Activated CD4-positive, alpha-beta T cell treated with anti-CD3 and anti-CD28 coated beads, Interleukin-2, amount 10 ng/mL, durations not matched to agents 7 days and 5 days (primary cell): ENCODE measurements at regions of chr10 and their contacts with region 1.

Region 1: DNA sequence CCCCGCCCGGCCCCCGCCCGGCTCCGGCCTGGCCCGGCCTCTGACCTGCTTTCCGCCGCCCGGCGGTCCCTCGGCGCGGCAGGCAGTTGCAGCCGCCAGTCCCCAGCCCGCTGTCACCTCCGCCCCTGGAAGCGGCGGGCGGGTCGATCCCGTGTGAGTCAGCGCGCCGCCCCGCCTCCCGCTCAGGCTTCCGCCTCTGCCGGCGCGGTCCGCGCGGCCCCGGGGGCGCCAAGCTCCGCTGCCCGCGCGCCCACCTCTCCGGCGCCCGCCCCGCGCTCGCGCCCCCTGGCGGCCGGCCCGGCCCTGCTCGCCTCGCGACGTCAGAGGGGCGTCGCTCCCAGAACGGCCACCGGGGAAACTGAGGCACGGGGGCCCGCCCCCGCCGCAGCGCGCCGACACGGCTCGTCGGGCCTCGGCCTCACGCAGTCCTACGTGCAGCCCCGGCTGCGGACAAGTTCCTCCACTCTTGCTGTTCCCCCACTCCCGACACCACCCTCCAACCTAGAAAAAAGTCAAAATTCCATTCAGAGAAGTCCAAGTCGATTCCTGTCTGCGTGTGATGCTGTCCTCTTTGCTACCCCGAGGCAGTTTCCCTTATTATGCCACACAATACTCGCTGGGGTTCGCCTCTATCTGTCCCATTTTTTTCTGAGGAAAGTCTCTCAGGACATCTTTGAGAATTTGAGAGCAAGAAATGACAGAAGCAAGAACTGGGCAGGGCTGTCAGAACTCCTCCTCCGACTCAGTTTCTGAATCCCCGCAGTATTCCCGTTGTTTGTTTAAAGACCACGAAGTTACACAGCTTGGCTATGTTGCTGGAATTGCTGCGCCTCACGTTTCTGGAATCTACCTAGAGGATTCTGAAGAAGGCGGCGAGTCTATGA is at the start of gene DNMBP:
- DNase-seq: peak; percentile 76
- H3K4me3 Mint-ChIP-seq: peak within 1 kb of the TSS; percentile 87
- H3K27ac Mint-ChIP-seq: peak within 1 kb of the TSS; percentile 81
- H3K4me1 Mint-ChIP-seq: peaks cover 38% of the 10 kb centered on the region
- H3K27me3 Mint-ChIP-seq: peaks cover 28% of the 10 kb centered on the region
- total RNA-seq, gene DNMBP: 2.9 to 3.2 TPM

Region 2: DNA sequence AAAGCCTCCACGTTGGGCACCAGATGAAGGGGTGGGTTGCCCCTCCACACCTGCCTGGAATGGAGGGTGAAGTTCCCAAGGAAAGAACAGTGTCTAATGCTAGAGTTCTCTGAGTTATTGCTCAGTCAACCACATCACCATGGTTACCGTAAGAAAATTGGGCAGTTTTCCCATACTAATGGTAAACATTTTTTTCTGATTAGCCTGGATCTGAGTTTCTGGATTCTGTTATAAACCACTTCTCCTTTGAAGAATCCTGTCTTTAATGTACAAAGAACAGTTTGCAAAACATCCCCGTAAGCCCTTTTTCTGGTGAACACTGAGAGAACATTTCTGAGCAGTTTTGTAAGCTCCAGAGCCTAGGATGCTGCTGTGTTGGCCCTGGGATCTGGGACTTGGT is 182.1 kb before region 1 on chr10:
- CTCF ChIA-PET with region 1: no interaction called
- POLR2A ChIA-PET with region 1: no interaction called
- DNase-seq: no peak
- H3K4me3 Mint-ChIP-seq: no peak overlapping the region
- H3K27ac Mint-ChIP-seq: no peak overlapping the region
- H3K4me1 Mint-ChIP-seq: peaks cover 12% of the 10 kb centered on the region
- H3K27me3 Mint-ChIP-seq: peaks cover 2% of the 10 kb centered on the region

Region 3: GRCh38 chr10:99845837-99846382 is 164.1 kb before region 1 on chr10:
- CTCF ChIA-PET with region 1: interaction called, 10 read pairs
- POLR2A ChIA-PET with region 1: no interaction called
- DNase-seq: peak; percentile 85
- H3K4me3 Mint-ChIP-seq: peak overlapping the region; percentile 4
- H3K27ac Mint-ChIP-seq: no peak overlapping the region
- H3K4me1 Mint-ChIP-seq: peaks cover 7% of the 10 kb centered on the region
- H3K27me3 Mint-ChIP-seq: no peaks in the 10 kb centered on the region

Region 4: GRCh38 chr10:99996671-99997625 is 13.1 kb before region 1 on chr10:
- CTCF ChIA-PET with region 1: interaction called, 10 read pairs
- POLR2A ChIA-PET with region 1: no interaction called
- DNase-seq: no peak
- H3K4me3 Mint-ChIP-seq: no peak overlapping the region
- H3K27ac Mint-ChIP-seq: no peak overlapping the region
- H3K4me1 Mint-ChIP-seq: peaks cover 21% of the 10 kb centered on the region
- H3K27me3 Mint-ChIP-seq: no peaks in the 10 kb centered on the region

Region 5: GRCh38 chr10:100020142-100020885 is 10.3 kb after region 1 on chr10:
- CTCF ChIA-PET with region 1: interaction called, 16 read pairs
- POLR2A ChIA-PET with region 1: no interaction called
- DNase-seq: no peak
- H3K4me3 Mint-ChIP-seq: no peak overlapping the region
- H3K27ac Mint-ChIP-seq: no peak overlapping the region
- H3K4me1 Mint-ChIP-seq: peaks cover 9% of the 10 kb centered on the region
- H3K27me3 Mint-ChIP-seq: peaks cover 18% of the 10 kb centered on the region